CD8-positive, alpha-beta T cell (primary cell): ENCODE measurements at regions of chr15 and their contacts with region 1.

Region 1: GRCh38 chr15:52261498-52262242 is 33.9 kb downstream of the MYO5C start:
- DNase-seq: peak in 7 of 9 experiments; percentile 8 to 71 (median 33)
- ATAC-seq: peak; percentile 87
- H3K4me3 ChIP-seq: peak overlapping the region in 1 of 2 experiments; percentile 9
- H3K4me3 Mint-ChIP-seq: peak overlapping the region; percentile 54
- H3K27ac ChIP-seq: peak overlapping the region in 1 of 2 experiments; percentile 67
- H3K27ac Mint-ChIP-seq: peak overlapping the region; percentile 75
- H3K4me1 ChIP-seq: peaks cover 39% of the 10 kb centered on the region
- H3K4me1 Mint-ChIP-seq: peaks cover 44% of the 10 kb centered on the region
- H3K27me3 ChIP-seq: no peaks in the 10 kb centered on the region
- H3K27me3 Mint-ChIP-seq: no peaks in the 10 kb centered on the region
- CTCF ChIP-seq: no peak

Region 2: GRCh38 chr15:51801391-51801835 is 460.3 kb before region 1 on chr15:
- CTCF ChIA-PET with region 1: no interaction called
- POLR2A ChIA-PET with region 1: no interaction called
- intact Hi-C with region 1: no loop called
- DNase-seq: peak in 2 of 9 experiments; percentile 5 to 8
- ATAC-seq: no peak
- H3K4me3 ChIP-seq: no peak overlapping the region
- H3K4me3 Mint-ChIP-seq: no peak overlapping the region
- H3K27ac ChIP-seq: no peak overlapping the region
- H3K27ac Mint-ChIP-seq: no peak overlapping the region
- H3K4me1 ChIP-seq: no peaks in the 10 kb centered on the region
- H3K4me1 Mint-ChIP-seq: no peaks in the 10 kb centered on the region
- H3K27me3 ChIP-seq: no peaks in the 10 kb centered on the region
- H3K27me3 Mint-ChIP-seq: no peaks in the 10 kb centered on the region
- CTCF ChIP-seq: no peak

Region 3: DNA sequence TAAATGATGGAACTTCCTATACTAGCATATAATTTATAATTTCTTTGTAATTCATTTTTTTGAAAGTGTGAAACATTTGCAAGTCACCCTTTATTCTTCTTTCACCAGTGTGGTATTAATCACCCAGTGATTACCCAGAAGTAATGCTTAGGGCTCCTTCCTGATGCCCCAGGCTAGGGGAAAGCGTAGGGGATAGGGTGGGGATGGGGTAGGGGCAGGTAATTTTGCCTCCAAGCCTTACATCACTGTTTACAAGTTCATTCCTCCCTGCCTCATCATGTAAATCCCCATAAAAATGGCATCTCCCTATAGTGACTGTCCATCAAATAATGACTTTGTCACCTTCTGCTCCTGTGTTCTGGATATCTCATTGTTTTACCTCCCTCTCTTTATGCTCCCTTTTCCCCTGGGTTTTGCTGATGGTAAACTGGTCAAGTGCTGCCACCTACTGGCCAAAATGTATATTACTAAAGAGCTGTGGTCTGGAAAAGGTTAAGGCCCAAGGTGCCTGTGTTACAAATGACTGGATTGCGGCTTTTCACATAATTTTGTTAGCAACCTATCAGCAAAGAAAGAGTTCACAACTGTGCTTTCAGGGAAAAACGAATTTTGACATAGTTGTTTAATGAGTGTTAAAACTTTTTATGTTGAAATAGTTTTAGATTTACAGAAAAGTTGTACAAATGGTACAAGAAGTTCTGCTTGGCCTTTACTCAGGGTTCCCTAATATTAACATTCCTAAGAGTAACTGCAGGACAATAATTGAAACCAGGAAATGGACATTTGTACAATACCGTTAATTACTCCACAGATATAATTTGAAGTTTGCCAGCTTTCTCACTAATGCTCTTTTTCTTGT is 473.8 kb after region 1 on chr15:
- CTCF ChIA-PET with region 1: interaction called, 137 read pairs
- POLR2A ChIA-PET with region 1: interaction called, 4 read pairs
- intact Hi-C with region 1: loop called (anchors 1 kb)
- DNase-seq: peak; percentile 39 to 83 (median 64)
- ATAC-seq: peak; percentile 89
- H3K4me3 ChIP-seq: no peak overlapping the region
- H3K4me3 Mint-ChIP-seq: no peak overlapping the region
- H3K27ac ChIP-seq: no peak overlapping the region
- H3K27ac Mint-ChIP-seq: no peak overlapping the region
- H3K4me1 ChIP-seq: peaks cover 3% of the 10 kb centered on the region
- H3K4me1 Mint-ChIP-seq: peaks cover 5% of the 10 kb centered on the region
- H3K27me3 ChIP-seq: no peaks in the 10 kb centered on the region
- H3K27me3 Mint-ChIP-seq: peaks cover 7% of the 10 kb centered on the region
- CTCF ChIP-seq: peak; percentile 95